Activated B cell treated with CpG ODN at 0.5 μM for 24 hours (primary cell): ENCODE measurements at regions of chr18 and their contacts with region 1.

Region 1: GRCh38 chr18:12947355-12948041 is at the start of gene SEH1L:
- DNase-seq: peak; percentile 96
- ATAC-seq: peak; percentile 90
- H3K4me3 Mint-ChIP-seq: peak within 1 kb of the TSS; percentile 96
- H3K27ac Mint-ChIP-seq: peak within 1 kb of the TSS; percentile 97
- H3K4me1 Mint-ChIP-seq: peaks cover 24% of the 10 kb centered on the region
- H3K27me3 Mint-ChIP-seq: no peaks in the 10 kb centered on the region
- CTCF ChIP-seq: no peak
- total RNA-seq, gene SEH1L: 67.0 and 79.3 TPM in 2 replicates

Region 2: GRCh38 chr18:12308386-12309100 is 639.0 kb before region 1 on chr18:
- CTCF ChIA-PET with region 1: no interaction called
- POLR2A ChIA-PET with region 1: no interaction called
- intact Hi-C with region 1: loop called (anchors 5 kb)
- DNase-seq: peak; percentile 57
- ATAC-seq: peak; percentile 63
- H3K4me3 Mint-ChIP-seq: peak overlapping the region; percentile 85
- H3K27ac Mint-ChIP-seq: peak overlapping the region; percentile 69
- H3K4me1 Mint-ChIP-seq: peaks cover 32% of the 10 kb centered on the region
- H3K27me3 Mint-ChIP-seq: peaks cover 20% of the 10 kb centered on the region
- CTCF ChIP-seq: no peak

Region 3: DNA sequence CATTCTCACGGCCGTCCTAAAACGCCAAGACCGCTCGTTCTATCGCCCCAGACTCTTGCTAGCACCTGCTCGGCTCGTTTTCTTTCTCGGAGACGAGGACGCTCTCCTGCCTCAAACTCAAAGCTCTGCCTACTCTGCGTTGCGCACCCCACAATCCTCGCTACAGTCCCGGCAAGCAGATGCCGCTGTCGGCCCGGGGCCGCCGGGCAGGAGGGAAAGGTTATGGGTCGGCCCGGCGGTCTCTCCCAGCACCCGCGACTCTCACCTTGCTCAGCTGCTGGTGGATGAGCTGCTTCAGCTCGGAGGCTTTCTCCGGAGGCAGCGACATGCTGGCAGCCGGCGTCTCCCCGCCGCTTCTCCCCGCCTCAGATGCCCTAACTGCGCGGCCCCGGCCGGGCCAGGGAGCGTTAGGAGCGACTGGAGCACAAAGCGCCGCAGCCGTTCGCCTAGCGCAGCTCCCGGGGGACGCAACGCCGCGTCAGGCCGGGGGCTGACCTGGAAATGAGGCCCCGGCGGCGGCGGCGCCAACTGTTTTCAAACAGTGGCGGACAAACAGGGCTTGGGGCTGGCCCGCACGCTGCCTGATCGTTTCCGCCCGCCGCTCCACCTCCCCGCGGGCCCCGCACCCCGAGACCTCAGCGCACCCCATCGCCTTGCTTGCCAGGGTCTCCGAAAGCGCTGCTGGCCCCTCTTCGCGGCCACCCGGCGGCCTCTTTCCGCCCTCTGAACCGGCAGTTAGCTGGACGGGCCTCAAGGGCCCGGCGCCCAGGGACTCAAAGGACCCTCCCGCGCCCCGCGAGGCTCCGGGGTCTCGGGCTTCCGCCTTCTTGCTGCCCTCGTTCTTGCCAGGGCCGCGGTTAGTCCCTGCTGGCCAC is 245.0 kb before region 1 on chr18 and contains the starts of genes CEP76 and PSMG2:
- CTCF ChIA-PET with region 1: interaction called, 3 read pairs
- POLR2A ChIA-PET with region 1: interaction called, 27 read pairs
- intact Hi-C with region 1: loop called (anchors 1 kb)
- DNase-seq: peak; percentile 90
- ATAC-seq: peak; percentile 88
- H3K4me3 Mint-ChIP-seq: peak within 1 kb of the TSS; percentile 99
- H3K27ac Mint-ChIP-seq: peak within 1 kb of the TSS; percentile 99
- H3K4me1 Mint-ChIP-seq: peaks cover 38% of the 10 kb centered on the region
- H3K27me3 Mint-ChIP-seq: no peaks in the 10 kb centered on the region
- CTCF ChIP-seq: no peak
- total RNA-seq, gene CEP76: 6.4 and 6.9 TPM in 2 replicates
- total RNA-seq, gene PSMG2: 67.4 and 69.1 TPM in 2 replicates

Region 4: DNA sequence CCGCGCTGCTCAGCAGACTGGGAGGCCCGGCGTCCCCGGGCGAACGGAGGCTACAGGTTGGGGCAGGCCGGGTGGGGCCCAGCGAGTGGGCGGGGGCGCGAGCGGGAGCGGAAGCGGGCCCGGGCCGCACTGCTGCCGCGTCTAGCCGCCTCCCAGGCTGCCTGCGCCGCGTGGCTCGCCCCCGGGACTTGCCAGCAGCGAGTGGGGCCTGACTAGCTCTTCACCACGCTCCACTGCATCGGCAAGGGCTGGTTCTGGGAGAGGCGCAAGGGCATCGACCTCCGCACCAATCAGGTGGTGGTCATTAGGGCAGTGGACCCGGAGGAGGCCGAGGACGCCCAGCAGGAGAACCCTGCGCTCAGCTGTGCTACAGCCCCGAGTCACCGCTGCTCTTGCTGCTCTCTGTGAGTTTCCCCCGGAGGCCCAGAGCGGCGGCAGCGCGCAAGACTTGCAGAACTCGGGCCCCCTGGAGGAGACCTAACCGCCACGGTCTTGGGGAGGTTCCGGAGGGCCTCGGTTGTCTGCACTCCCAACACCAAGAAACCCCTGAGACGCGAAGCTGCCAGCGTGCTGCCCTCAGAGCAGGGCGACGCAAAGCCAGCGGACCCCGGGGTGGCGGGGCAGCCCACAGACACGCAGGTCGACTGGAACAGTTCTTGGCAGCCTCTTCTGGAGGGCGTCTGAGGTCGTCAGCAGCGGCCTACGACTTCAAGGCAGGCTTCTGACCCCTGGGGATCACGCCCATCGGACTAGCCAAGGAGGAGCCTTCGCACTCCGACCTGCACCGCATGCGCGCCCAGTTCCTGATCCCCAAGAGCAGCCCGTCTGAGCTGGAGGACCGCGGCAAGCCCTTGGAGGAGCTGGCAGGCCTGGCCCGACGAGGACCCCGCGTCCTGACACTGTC is 36.2 kb before region 1 on chr18:
- CTCF ChIA-PET with region 1: no interaction called
- POLR2A ChIA-PET with region 1: no interaction called
- intact Hi-C with region 1: loop called (anchors 1 kb)
- DNase-seq: peak; percentile 59
- ATAC-seq: peak; percentile 93
- H3K4me3 Mint-ChIP-seq: peak overlapping the region; percentile 78
- H3K27ac Mint-ChIP-seq: no peak overlapping the region
- H3K4me1 Mint-ChIP-seq: peaks cover 4% of the 10 kb centered on the region
- H3K27me3 Mint-ChIP-seq: peaks cover 5% of the 10 kb centered on the region
- CTCF ChIP-seq: no peak

Region 5: DNA sequence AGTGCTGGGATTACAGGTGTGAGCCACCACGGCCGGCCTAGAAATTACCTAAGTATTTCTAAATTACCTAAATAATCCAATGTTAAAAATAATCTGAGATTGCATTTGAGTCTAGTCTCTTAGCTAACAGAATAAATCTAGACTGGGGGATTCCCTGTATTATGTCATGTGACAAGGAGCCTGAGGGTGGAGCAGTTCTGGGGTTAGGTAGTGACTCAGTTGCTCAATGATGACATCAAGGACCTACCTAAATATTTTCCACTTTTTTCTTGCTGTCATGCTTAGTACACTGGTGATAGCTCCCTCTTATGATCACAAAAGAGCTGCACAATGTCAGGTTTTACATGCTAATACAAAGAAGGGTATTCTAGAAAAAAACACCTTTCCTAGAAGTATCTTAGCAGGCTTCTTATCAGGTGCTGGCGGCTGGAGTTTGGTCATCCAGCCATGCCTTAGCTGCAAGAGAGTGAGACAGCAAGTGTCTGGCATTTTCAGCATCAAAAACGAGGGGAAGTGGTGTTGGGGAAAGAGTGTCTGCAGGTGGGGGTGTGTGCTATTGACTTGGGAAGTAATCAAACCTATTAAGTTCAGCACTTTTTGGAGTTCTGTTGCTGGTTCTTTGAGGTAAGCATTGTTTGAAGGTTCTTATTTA is 26.2 kb after region 1 on chr18:
- CTCF ChIA-PET with region 1: no interaction called
- POLR2A ChIA-PET with region 1: no interaction called
- intact Hi-C with region 1: no loop called
- DNase-seq: no peak
- ATAC-seq: no peak
- H3K4me3 Mint-ChIP-seq: no peak overlapping the region
- H3K27ac Mint-ChIP-seq: no peak overlapping the region
- H3K4me1 Mint-ChIP-seq: no peaks in the 10 kb centered on the region
- H3K27me3 Mint-ChIP-seq: no peaks in the 10 kb centered on the region
- CTCF ChIP-seq: no peak

Region 6: DNA sequence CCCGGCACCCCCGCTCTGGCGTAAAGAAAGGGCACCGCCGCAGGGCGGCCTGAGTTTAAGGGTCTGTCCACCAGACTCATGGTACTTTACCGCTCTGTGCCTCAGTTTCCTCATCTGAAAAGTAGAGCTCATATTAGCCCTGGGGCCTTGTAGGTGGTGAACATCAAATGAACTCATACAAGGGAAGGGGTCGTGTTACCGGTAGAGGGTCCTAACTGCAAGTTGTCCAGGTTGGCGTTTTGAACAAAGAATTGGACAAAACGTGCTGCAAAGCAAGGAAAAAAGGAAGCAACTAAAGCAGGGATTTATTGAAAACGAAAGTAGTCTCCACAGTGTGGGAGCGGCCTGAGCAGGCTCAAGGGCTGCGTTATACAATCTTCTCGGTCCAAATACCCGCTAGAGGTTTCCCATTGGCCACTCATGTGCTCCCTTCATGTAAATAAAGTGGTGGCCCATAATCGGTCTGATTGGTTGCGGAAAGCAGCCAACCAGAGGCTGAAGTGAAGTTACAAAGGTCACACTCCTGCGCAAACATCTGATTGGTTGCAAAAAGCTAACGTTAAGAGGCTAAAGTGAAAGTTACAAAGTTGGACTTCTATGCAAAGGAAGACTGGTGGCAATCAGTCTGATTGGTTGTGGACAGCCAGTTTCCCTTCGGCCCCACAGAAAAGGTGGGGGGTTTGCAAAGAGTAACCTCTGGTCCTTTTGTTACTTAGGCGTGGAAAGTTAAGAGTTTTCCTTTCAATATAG is 190.3 kb after region 1 on chr18:
- CTCF ChIA-PET with region 1: no interaction called
- POLR2A ChIA-PET with region 1: interaction called, 6 read pairs
- intact Hi-C with region 1: loop called (anchors 1 kb)
- DNase-seq: peak; percentile 43
- ATAC-seq: peak; percentile 87
- H3K4me3 Mint-ChIP-seq: peak overlapping the region; percentile 98
- H3K27ac Mint-ChIP-seq: peak overlapping the region; percentile 97
- H3K4me1 Mint-ChIP-seq: peaks cover 23% of the 10 kb centered on the region
- H3K27me3 Mint-ChIP-seq: no peaks in the 10 kb centered on the region
- CTCF ChIP-seq: no peak